Ascending aorta (tissue), 2 donors: ENCODE measurements at regions of chr22 and their contacts with region 1.

Region 1: DNA sequence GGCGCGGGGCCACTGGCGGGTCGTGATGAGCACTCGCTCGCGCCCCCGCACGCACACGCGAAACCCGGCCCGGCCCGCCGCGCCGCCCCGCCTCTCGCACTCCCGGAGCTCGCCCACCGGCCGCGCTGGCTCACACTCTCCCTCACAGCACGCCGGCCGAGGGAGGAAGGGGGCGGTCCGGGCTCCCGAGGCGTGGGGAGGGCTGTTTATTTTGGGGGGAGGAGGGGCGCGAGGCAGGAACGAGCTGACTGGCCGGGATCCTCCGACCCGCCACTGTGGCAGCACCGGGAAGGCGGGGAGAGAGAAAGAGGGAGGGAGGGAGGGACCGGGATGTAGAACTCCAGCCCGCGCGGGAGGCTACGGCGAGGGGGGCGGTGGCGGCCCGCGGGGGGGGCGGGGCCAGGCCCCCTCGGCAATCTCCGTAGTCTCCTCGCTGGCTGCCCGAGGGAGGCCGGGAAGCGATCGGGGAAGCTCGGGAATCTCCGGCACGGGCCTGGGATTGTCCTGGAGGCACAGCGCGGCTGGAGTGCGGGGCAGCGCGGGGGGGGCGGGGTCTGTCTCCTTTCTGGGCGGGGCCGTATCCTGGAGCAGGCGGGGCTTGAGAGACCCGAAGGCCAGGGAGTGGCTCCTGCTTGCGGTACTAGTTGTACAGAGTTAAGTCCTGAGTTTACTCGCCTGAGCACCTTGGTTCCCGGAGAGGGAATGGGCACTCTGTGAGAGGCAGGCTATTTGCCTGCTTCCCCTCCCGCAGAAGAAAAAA is at the start of gene RBFOX2:
- DNase-seq: peak; percentile 89 to 99
- H3K4me3 ChIP-seq: peak within 1 kb of the TSS; percentile 83 to 96
- H3K27ac ChIP-seq: peak within 1 kb of the TSS; percentile 90 to 95
- H3K4me1 ChIP-seq: peaks cover 0 to 10% of the 10 kb centered on the region in 2 donors
- H3K27me3 ChIP-seq: no peaks in the 10 kb centered on the region
- CTCF ChIP-seq: no peak
- total RNA-seq, gene RBFOX2: 58.1 TPM

Region 2: GRCh38 chr22:35930933-35931332 is 97.9 kb before region 1 on chr22:
- intact Hi-C with region 1: loop called (anchors 2 kb)
- DNase-seq: no peak
- H3K4me3 ChIP-seq: no peak overlapping the region
- H3K27ac ChIP-seq: no peak overlapping the region
- H3K4me1 ChIP-seq: no peaks in the 10 kb centered on the region
- H3K27me3 ChIP-seq: no peaks in the 10 kb centered on the region
- CTCF ChIP-seq: peak; percentile 56 to 72 (median 71)

Region 3: GRCh38 chr22:35961480-35962295 is 67.1 kb before region 1 on chr22:
- intact Hi-C with region 1: loop called (anchors 1 kb)
- DNase-seq: peak; percentile 13 to 88
- H3K4me3 ChIP-seq: peak overlapping the region; percentile 15 to 57
- H3K27ac ChIP-seq: peak overlapping the region; percentile 68 to 79
- H3K4me1 ChIP-seq: peaks cover 0 to 30% of the 10 kb centered on the region in 2 donors
- H3K27me3 ChIP-seq: no peaks in the 10 kb centered on the region
- CTCF ChIP-seq: no peak

Region 4: DNA sequence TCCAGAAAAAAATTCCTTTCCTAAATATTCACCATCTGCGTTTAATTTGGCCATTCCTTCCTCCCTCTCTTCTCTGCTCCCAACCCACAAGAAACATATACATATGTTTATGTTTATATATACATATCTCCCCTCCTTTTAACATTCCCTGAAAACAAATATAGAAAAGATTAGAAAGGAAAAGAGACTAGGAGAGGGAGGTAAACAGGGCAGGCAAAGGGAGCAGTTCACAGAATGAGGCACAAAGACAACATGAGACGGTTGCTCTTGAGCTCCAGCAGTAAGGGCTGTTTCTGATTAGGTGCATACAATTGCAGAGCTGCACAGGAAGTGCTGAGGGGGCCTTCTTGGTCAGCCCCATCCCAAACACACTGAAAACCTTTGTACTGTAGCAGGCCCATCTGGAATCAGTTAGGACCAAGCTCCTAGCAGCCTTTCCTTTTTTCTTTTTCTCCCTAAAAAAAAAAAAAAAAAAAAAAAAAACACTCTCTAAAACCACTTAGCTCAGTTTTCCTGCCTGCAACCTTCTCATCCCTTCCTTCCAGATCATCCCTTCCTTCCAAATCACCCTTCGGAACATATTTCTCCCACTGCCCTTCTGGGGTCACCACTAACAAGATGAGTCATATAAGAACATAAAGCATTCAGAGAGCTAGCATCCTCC is 57.2 kb before region 1 on chr22:
- intact Hi-C with region 1: loop called (anchors 2 kb)
- DNase-seq: no peak
- H3K4me3 ChIP-seq: no peak overlapping the region
- H3K27ac ChIP-seq: peak overlapping the region; percentile 82 to 92
- H3K4me1 ChIP-seq: peaks cover 8 to 51% of the 10 kb centered on the region in 2 donors
- H3K27me3 ChIP-seq: no peaks in the 10 kb centered on the region
- CTCF ChIP-seq: no peak

Region 5: DNA sequence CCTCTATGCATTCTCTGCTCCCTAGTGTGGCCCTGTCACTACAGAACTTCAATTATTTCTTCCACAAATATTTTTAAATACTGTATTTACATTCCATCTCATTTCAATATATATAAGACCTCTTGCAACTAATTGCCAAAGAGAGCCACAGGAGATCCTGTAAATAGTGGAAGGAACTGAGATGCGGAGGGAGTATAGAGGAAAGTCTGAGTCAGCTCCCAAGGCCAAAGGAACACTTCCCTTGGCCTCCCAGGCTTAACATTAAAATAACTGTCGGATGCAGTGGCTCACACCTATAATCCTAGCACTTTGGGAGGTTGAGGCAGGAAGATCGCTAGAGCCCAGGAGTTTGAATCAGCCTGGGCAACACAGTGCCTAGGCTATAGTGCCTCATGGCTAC is 31.4 kb before region 1 on chr22:
- intact Hi-C with region 1: loop called (anchors 1 kb)
- DNase-seq: no peak
- H3K4me3 ChIP-seq: no peak overlapping the region
- H3K27ac ChIP-seq: no peak overlapping the region
- H3K4me1 ChIP-seq: peaks cover 4 to 14% of the 10 kb centered on the region in 2 donors
- H3K27me3 ChIP-seq: no peaks in the 10 kb centered on the region
- CTCF ChIP-seq: no peak

Region 6: GRCh38 chr22:36055376-36056295 is 26.8 kb after region 1 on chr22:
- intact Hi-C with region 1: no loop called
- DNase-seq: no peak
- H3K4me3 ChIP-seq: peak overlapping the region in 1 of 2 donors; percentile 38
- H3K27ac ChIP-seq: peak overlapping the region in 1 of 2 donors; percentile 28
- H3K4me1 ChIP-seq: peaks cover 0 to 4% of the 10 kb centered on the region in 2 donors
- H3K27me3 ChIP-seq: no peaks in the 10 kb centered on the region
- CTCF ChIP-seq: no peak

Region 7: DNA sequence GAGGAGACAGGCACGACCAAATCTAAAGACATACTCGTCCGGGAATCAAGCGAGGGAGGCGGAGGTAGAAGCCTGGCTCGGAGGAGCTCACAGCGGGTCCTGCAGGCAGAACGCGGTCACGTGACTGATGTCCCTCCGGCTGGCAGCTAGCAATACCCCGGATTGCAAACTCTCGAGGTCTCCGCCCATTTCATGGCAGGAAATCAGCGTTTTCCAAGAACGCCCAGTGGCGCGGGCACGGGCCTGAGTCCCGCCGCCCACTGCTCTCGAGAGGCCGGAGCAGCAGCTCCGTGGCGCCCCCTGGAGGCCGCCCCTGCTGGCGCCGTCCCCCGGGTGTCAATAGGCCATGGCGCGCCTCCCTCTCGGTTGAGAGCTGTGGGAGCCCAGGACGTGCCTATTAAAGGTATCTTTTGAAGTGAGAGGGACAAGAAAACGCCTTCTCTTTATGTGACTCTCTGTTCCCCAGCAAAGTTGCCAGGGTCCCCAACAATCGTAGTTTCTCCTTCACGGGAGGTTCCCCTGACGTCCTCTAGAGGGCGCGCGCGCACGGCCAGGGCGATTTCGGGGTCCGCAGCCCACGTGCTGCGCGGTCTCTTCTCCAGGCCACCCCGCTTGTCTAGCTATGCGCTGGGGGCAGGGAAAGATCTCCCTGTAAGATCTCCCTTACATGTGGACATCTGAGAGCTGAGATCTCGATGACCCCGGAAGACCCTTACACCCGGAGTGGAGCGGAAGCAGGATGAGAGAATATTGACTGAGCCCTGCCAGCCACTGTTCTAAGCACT is 37.1 kb after region 1 on chr22:
- intact Hi-C with region 1: loop called (anchors 1 kb)
- DNase-seq: peak; percentile 77 to 97
- H3K4me3 ChIP-seq: peak overlapping the region; percentile 61 to 64
- H3K27ac ChIP-seq: peak overlapping the region; percentile 83 to 87
- H3K4me1 ChIP-seq: peaks cover 0 to 3% of the 10 kb centered on the region in 2 donors
- H3K27me3 ChIP-seq: no peaks in the 10 kb centered on the region
- CTCF ChIP-seq: peak; percentile 99 to 100 (median 99)

Region 8: GRCh38 chr22:36156515-36157419 is 127.9 kb after region 1 on chr22:
- intact Hi-C with region 1: no loop called
- DNase-seq: peak; percentile 71 to 96
- H3K4me3 ChIP-seq: peak overlapping the region; percentile 50 to 63
- H3K27ac ChIP-seq: peak overlapping the region; percentile 94
- H3K4me1 ChIP-seq: peaks cover 12 to 61% of the 10 kb centered on the region in 2 donors
- H3K27me3 ChIP-seq: no peaks in the 10 kb centered on the region
- CTCF ChIP-seq: no peak